Left colon (tissue), 2 donors: ENCODE measurements at regions of chr2 and their contacts with region 1.

Region 1: GRCh38 chr2:33033606-33034081 is 86.9 kb downstream of the LTBP1 start:
- DNase-seq: no peak
- ATAC-seq: peak; percentile 83

Region 2: DNA sequence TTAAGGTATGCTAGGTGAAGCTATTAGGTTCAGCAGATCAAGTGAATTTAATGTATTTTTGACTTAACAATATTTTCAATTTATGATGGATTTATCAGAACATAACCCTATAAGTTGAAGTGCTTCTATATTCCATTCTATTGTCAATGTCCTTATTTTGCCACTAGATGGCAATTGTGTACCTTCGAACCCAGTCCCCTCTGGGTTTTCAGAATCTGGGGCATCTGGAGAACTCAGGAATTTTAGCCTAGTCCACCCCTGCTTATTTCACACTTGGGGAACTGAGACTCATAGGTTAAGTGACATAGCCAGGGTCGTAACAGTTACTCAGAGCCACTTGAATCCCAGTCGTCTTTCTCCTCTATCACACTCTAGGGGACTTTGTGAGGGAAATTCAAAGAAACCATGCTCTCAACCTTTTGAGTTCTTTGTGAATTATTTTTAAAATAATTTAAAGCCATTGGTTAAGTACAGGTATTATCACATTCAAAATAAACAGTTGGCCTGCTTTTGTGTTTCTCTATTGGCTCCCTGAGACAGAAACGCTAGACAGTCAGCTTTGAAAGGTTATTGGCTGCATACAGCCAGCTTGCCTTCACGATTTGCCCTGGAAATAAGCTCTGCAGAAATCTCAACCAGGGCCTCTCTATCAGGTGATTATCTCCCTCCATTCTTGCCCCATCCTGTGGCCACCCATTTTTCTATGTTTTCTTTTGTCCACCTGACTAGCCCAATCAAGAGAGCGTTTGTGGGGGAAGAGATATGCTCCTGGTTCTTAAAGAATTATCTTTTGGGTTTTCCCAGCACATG is 260.8 kb before region 1 on chr2:
- intact Hi-C with region 1: loop called in 1 of 2 experiments (anchors 2 kb)
- DNase-seq: no peak
- ATAC-seq: peak; percentile 74

Region 3: GRCh38 chr2:33275689-33276444 is 242.2 kb after region 1 on chr2:
- intact Hi-C with region 1: loop called in 1 of 2 experiments (anchors 10 kb)
- DNase-seq: no peak
- ATAC-seq: no peak

Region 4: GRCh38 chr2:33372940-33373553 is 339.4 kb after region 1 on chr2:
- intact Hi-C with region 1: loop called in 1 of 2 experiments (anchors 10 kb)
- DNase-seq: no peak
- ATAC-seq: peak; percentile 55